CD14-positive monocyte (primary cell): ENCODE measurements at regions of chr1 and their contacts with region 1.

Region 1: GRCh38 chr1:161298116-161298515 is 11.7 kb downstream of the MPZ start:
- DNase-seq: peak; percentile 29 to 51 (median 33)
- H3K4me3 ChIP-seq: peak overlapping the region in 1 of 3 experiments; percentile 31
- H3K4me3 Mint-ChIP-seq: peak overlapping the region; percentile 20 to 56
- H3K27ac ChIP-seq: peak overlapping the region; percentile 43 to 50
- H3K27ac Mint-ChIP-seq: peak overlapping the region; percentile 4 to 90 (median 76)
- H3K4me1 ChIP-seq: peaks cover 27 to 31% of the 10 kb centered on the region in 2 donors
- H3K4me1 Mint-ChIP-seq: peaks cover 23% of the 10 kb centered on the region
- H3K27me3 ChIP-seq: no peaks in the 10 kb centered on the region
- H3K27me3 Mint-ChIP-seq: peaks cover 0 to 4% (median 2%) of the 10 kb centered on the region in 3 donors
- CTCF ChIP-seq: no peak

Region 2: GRCh38 chr1:161192476-161193465 is 105.3 kb before region 1 on chr1:
- intact Hi-C with region 1: no loop called
- DNase-seq: peak; percentile 63 to 81 (median 74)
- H3K4me3 ChIP-seq: no peak overlapping the region
- H3K4me3 Mint-ChIP-seq: no peak overlapping the region
- H3K27ac ChIP-seq: peak overlapping the region in 1 of 2 donors; percentile 22
- H3K27ac Mint-ChIP-seq: peak overlapping the region in 5 of 7 donors; percentile 18 to 81 (median 35)
- H3K4me1 ChIP-seq: peaks cover 51 to 55% of the 10 kb centered on the region in 2 donors
- H3K4me1 Mint-ChIP-seq: peaks cover 63% of the 10 kb centered on the region
- H3K27me3 ChIP-seq: no peaks in the 10 kb centered on the region
- H3K27me3 Mint-ChIP-seq: peaks cover 0 to 3% (median 2%) of the 10 kb centered on the region in 3 donors
- CTCF ChIP-seq: peak; percentile 84

Region 3: GRCh38 chr1:161382214-161383019 is 84.3 kb after region 1 on chr1:
- intact Hi-C with region 1: loop called in 1 of 2 experiments (anchors 5 kb)
- DNase-seq: peak; percentile 34 to 70 (median 58)
- H3K4me3 ChIP-seq: no peak overlapping the region
- H3K4me3 Mint-ChIP-seq: no peak overlapping the region
- H3K27ac ChIP-seq: no peak overlapping the region
- H3K27ac Mint-ChIP-seq: peak overlapping the region in 3 of 7 donors; percentile 11 to 79 (median 25)
- H3K4me1 ChIP-seq: peaks cover 5 to 6% of the 10 kb centered on the region in 2 donors
- H3K4me1 Mint-ChIP-seq: peaks cover 12% of the 10 kb centered on the region
- H3K27me3 ChIP-seq: no peaks in the 10 kb centered on the region
- H3K27me3 Mint-ChIP-seq: peaks cover 1 to 7% (median 2%) of the 10 kb centered on the region in 3 donors
- CTCF ChIP-seq: peak; percentile 82

Region 4: GRCh38 chr1:161549652-161550051 is 251.5 kb after region 1 on chr1 and contains the start of gene FCGR3A:
- intact Hi-C with region 1: no loop called
- DNase-seq: peak; percentile 57 to 80 (median 60)
- H3K4me3 ChIP-seq: peak within 1 kb of the TSS; percentile 21 to 64 (median 38)
- H3K4me3 Mint-ChIP-seq: peak within 1 kb of the TSS; percentile 53 to 78
- H3K27ac ChIP-seq: peak within 1 kb of the TSS; percentile 42 to 77
- H3K27ac Mint-ChIP-seq: peak within 1 kb of the TSS in 6 of 7 donors; percentile 55 to 80 (median 78)
- H3K4me1 ChIP-seq: peaks cover 39 to 56% of the 10 kb centered on the region in 2 donors
- H3K4me1 Mint-ChIP-seq: peaks cover 57% of the 10 kb centered on the region
- H3K27me3 ChIP-seq: no peaks in the 10 kb centered on the region
- H3K27me3 Mint-ChIP-seq: peaks cover 0 to 2% (median 0%) of the 10 kb centered on the region in 3 donors
- CTCF ChIP-seq: no peak
- polyA plus RNA-seq, gene FCGR3A: 35.9 to 138 (median 131) TPM